Aorta (tissue), 5 donors: ENCODE measurements at regions of chr3 and their contacts with region 1.

Region 1: DNA sequence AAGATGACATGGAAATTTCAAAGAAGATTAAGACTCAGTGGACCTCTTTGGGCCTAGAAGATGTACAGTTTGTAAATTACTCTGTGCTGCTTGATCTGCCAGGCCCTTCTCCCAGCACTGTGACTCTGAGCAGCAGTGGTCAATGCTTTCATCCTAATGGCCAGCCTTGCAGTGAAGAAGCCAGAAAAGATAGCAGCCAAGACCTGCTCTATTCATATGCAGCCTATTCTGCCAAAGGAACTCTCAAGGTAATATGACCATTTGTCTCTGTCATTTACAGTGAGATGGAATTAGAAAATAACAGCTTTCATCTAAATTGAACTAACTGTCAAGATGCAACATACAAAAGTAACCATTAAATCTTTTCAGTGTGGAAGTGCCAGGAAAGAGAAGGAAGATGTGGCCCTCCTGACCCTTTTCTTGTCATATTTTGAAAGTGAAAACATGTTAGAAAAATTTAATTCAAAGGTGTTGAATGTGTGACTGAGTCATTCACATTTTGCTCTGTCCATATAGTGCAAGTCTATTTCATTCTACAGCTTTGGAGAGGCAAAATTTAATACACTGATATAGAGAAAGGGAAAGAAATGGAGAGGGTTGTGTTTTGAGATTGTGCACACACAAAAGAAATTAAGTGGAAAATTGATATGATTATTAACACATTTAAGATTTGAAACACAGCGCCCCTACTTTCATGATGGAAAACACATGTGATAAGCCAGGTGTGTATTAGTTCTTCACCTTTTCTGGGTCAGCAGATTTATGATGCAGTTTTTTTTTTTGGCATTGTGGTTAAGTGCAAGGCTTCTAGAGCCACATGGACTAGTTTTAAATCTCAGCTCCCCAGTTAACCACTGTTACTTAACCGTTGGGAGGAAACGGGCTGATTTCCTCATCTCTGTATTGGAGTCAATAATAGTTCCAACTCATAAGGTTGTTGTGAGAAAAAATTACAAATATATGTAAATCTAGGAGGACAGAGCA is 375.1 kb downstream of the NAALADL2 start:
- DNase-seq: no peak
- ATAC-seq: no peak
- H3K4me3 ChIP-seq: no peak overlapping the region
- H3K27ac ChIP-seq: no peak overlapping the region
- H3K4me1 ChIP-seq: peaks cover 0 to 2% of the 10 kb centered on the region in 2 donors
- H3K27me3 ChIP-seq: no peaks in the 10 kb centered on the region

Region 2: GRCh38 chr3:174659511-174659910 is 574.7 kb before region 1 on chr3:
- intact Hi-C with region 1: loop called in 1 of 2 experiments (anchors 5 kb)
- DNase-seq: no peak
- ATAC-seq: no peak
- H3K4me3 ChIP-seq: no peak overlapping the region
- H3K27ac ChIP-seq: no peak overlapping the region
- H3K4me1 ChIP-seq: no peaks in the 10 kb centered on the region
- H3K27me3 ChIP-seq: no peaks in the 10 kb centered on the region